Activated CD4-positive, alpha-beta memory T cell treated with anti-CD3 and anti-CD28 coated beads, Interleukin-2, amount 10 ng/mL, durations not matched to agents 7 days and 5 days (primary cell): ENCODE measurements at regions of chr10 and their contacts with region 1.

Region 1: GRCh38 chr10:131900350-131901146 is at the start of gene PPP2R2D:
- DNase-seq: peak; percentile 94
- H3K4me3 Mint-ChIP-seq: peak within 1 kb of the TSS; percentile 88
- H3K27ac Mint-ChIP-seq: peak within 1 kb of the TSS; percentile 89
- H3K4me1 Mint-ChIP-seq: peaks cover 69% of the 10 kb centered on the region
- H3K27me3 Mint-ChIP-seq: peaks cover 12% of the 10 kb centered on the region
- total RNA-seq, gene PPP2R2D: 40.3 to 40.8 TPM

Region 2: GRCh38 chr10:131972474-131973071 is 72.0 kb after region 1 on chr10:
- CTCF ChIA-PET with region 1: interaction called, 6 read pairs
- POLR2A ChIA-PET with region 1: interaction called, 17 read pairs
- DNase-seq: peak; percentile 50
- H3K4me3 Mint-ChIP-seq: peak overlapping the region; percentile 72
- H3K27ac Mint-ChIP-seq: peak overlapping the region; percentile 89
- H3K4me1 Mint-ChIP-seq: peaks cover 61% of the 10 kb centered on the region
- H3K27me3 Mint-ChIP-seq: no peaks in the 10 kb centered on the region